Posterior vena cava (tissue), 2 donors: ENCODE measurements at regions of chr17 and their contacts with region 1.

Region 1: GRCh38 chr17:11372692-11373091 is 131.7 kb downstream of the SHISA6 start:
- DNase-seq: no peak

Region 2: GRCh38 chr17:11430751-11431150 is 58.1 kb after region 1 on chr17:
- intact Hi-C with region 1: no loop called
- DNase-seq: no peak

Region 3: GRCh38 chr17:11900041-11900476 is 527.4 kb after region 1 on chr17:
- intact Hi-C with region 1: loop called in 1 of 2 experiments (anchors 10 kb)
- DNase-seq: no peak